HCT116 (cell line): ENCODE measurements at regions of chr9 and their contacts with region 1.

Region 1: GRCh38 chr9:98775831-98776441 is 20.4 kb downstream of the ANKS6 start:
- DNase-seq: peak; percentile 60
- ATAC-seq: peak; percentile 63
- H3K4me3 ChIP-seq: no peak overlapping the region
- H3K27ac ChIP-seq: no peak overlapping the region
- H3K4me1 ChIP-seq: peaks cover 0 to 12% of the 10 kb centered on the region in 2 experiments; a peak in 2 of 4 replicates
- H3K27me3 ChIP-seq: no peaks in the 10 kb centered on the region
- CTCF ChIP-seq: peak; percentile 60 to 85 (median 80); a peak in 5 of 6 replicates
- POLR2A ChIP-seq: no peak
- RAD21 ChIP-seq: peak; percentile 76

Region 2: DNA sequence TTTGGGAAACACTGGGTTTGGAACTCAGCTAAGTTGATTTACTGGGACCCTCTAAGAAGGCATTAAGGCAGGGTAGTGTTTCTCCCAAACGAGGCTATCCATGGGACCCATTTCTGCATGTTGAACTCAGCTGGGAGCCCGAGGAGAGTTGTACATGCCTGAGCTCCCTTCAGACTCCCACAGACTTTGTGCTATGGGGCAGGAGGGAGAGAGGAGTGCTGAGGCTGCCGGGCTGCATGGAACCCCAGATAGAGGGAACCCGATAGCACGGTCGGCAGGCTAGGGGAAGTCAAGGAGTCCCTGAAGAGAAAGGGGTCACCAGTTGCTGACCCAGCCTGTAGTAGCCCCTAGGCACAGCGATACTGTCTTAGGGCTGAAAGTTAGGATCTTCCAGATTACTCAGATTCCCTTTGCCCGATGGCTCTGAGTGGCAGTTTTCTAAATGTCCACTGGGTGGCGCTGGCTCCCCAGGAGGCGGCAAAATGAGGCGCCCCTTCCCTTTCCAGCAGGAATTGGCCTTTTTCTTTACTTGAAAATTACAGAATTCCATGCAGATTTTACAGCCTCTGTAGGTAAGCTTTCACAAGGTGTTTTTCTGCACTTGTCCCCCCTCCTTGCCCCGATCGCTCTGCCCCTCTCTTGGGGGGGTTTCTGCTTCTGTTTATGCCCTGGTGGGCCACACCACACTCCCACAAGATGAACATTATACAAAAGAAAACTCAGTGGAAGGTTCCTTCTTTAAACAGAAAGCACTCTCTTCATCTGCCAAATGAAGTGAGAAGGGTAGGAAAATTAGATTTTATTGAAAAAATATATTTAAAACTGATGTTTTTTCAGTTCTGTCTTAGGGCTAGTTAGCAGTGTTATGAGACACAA is 701.6 kb before region 1 on chr9:
- CTCF ChIA-PET with region 1: no interaction called
- POLR2A ChIA-PET with region 1: no interaction called
- RAD21 ChIA-PET with region 1: no interaction called
- intact Hi-C with region 1: loop called (anchors 10 kb)
- DNase-seq: no peak
- ATAC-seq: peak; percentile 69
- H3K4me3 ChIP-seq: no peak overlapping the region
- H3K27ac ChIP-seq: 0 out of 2 replicates have a peak overlapping the region, but pooled peaks have one; percentile 12
- H3K4me1 ChIP-seq: peaks cover 0 to 18% of the 10 kb centered on the region in 2 experiments; a peak in 3 of 4 replicates
- H3K27me3 ChIP-seq: no peaks in the 10 kb centered on the region
- CTCF ChIP-seq: peak; percentile 81 to 97 (median 91)
- POLR2A ChIP-seq: no peak
- RAD21 ChIP-seq: peak; percentile 85

Region 3: DNA sequence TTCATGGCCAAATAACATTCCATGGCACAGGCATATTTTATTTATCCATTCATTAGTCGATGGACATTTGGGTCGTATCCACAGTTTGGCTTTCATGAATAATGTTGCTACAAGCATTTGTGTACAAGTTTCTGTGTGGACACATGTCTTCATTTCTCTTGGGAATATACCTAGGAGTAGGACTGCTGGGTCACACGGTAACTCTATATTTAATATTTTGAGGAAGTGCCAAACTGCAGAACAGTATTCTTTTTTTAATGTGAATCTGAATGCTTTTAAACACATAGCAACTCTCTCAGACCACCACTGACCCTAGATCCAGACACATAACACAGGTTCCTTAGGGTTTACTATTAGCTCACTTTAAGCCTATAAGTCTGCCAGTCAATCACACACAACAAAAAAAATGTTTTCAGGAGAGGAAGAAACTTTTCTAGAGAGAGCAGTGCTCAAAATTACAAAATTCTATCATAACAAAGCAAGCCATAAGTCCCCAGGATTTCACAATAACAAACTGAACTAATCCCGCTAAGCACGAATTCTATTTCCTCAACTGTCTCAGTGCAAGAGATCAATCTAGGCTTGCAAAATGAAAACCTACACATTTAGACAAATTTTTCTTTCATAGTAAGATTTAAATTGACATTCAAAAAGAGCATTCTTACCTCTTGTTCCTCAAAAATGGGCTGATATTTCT is 25.4 kb before region 1 on chr9:
- CTCF ChIA-PET with region 1: interaction called, 11 read pairs
- POLR2A ChIA-PET with region 1: no interaction called
- RAD21 ChIA-PET with region 1: no interaction called
- intact Hi-C with region 1: no loop called
- DNase-seq: no peak
- ATAC-seq: no peak
- H3K4me3 ChIP-seq: no peak overlapping the region
- H3K27ac ChIP-seq: no peak overlapping the region
- H3K4me1 ChIP-seq: no peaks in the 10 kb centered on the region
- H3K27me3 ChIP-seq: no peaks in the 10 kb centered on the region
- CTCF ChIP-seq: no peak
- POLR2A ChIP-seq: no peak
- RAD21 ChIP-seq: no peak

Region 4: DNA sequence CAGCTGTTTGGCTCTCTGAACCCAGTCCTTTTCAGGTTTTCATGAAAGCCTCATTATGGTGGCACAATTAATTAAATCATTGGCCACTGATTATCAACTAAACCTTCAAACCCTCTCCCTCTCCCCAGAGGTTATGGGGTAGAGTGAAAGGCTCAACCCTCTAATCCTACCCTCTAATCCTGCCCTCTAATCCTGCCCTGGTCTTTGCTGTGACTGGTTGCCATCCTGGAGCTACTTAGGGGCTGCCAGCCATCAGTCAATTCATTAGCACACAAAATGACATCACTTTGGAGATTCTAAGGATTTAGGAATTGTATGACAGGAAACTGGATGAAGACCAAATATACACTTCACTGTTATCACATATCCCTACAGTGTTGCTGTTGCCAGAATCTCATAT is 15.7 kb before region 1 on chr9:
- CTCF ChIA-PET with region 1: interaction called, 13 read pairs
- POLR2A ChIA-PET with region 1: no interaction called
- RAD21 ChIA-PET with region 1: no interaction called
- intact Hi-C with region 1: no loop called
- DNase-seq: no peak
- ATAC-seq: no peak
- H3K4me3 ChIP-seq: no peak overlapping the region
- H3K27ac ChIP-seq: no peak overlapping the region
- H3K4me1 ChIP-seq: no peaks in the 10 kb centered on the region
- H3K27me3 ChIP-seq: no peaks in the 10 kb centered on the region
- CTCF ChIP-seq: no peak
- POLR2A ChIP-seq: no peak
- RAD21 ChIP-seq: no peak